Dorsolateral prefrontal cortex (tissue), 120 donors: ENCODE measurements at regions of chr12 and their contacts with region 1.

Region 1: DNA sequence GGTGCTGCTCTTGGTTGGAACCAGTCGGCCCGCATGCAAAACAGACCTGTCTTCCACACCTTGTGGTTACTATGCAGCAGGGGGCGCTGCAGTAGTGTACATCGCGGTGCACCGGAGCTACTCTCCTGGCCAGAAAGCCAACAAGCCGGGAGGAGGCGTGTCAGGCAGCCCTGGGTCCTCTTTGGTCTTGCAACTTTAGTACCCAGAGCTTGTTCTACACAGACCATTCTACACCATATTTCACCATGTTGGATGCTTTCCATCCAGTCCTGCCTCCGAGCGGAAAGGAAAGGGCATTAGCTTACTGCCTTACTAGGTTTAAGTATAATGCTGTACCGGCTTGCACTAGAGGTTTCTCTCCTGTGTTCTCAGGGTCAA is 927 bp upstream of the TMTC2 start:
- DNase-seq: peak; percentile 93 to 98 (median 97)
- H3K4me3 ChIP-seq: peak overlapping the region; percentile 51 to 96 (median 87)
- H3K27ac ChIP-seq: peak overlapping the region; percentile 80 to 100 (median 99)
- H3K27me3 ChIP-seq: no peaks in the 10 kb centered on the region
- CTCF ChIP-seq: peak; percentile 79 to 99 (median 94)

Region 2: DNA sequence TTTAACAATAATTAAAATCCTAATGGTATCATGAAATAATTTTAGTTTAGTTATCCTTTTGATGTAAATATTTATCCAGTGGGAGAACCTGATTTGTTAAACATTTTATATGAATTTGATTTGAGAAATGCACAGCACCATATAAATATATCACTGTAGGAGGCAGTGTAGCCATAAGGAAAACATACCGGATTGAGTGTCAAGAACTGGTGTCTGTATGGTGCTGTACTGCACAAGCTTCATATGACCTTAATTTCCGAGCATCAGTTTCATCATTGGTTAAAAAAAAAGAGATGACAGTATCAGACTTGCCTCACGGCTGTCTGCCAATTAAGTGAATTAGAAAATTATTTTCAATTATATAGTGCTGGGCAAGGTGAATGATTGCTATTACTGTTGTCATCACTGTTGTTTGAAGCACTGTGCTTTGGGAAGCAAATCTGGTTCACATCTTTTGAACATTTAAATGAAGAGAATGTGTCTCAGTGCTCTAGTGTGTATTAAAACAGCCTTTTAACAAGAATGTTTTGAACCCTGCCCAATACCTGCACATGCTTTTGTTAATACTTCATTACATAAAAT is 73.1 kb after region 1 on chr12:
- intact Hi-C with region 1: loop called in 1 of 2 experiments (anchors 5 kb)
- DNase-seq: no peak
- H3K4me3 ChIP-seq: no peak overlapping the region
- H3K27ac ChIP-seq: peak overlapping the region in 52 of 59 donors; percentile 2 to 80 (median 50)
- H3K27me3 ChIP-seq: no peaks in the 10 kb centered on the region
- CTCF ChIP-seq: peak in 38 of 56 donors; percentile 9 to 65 (median 36)

Region 3: DNA sequence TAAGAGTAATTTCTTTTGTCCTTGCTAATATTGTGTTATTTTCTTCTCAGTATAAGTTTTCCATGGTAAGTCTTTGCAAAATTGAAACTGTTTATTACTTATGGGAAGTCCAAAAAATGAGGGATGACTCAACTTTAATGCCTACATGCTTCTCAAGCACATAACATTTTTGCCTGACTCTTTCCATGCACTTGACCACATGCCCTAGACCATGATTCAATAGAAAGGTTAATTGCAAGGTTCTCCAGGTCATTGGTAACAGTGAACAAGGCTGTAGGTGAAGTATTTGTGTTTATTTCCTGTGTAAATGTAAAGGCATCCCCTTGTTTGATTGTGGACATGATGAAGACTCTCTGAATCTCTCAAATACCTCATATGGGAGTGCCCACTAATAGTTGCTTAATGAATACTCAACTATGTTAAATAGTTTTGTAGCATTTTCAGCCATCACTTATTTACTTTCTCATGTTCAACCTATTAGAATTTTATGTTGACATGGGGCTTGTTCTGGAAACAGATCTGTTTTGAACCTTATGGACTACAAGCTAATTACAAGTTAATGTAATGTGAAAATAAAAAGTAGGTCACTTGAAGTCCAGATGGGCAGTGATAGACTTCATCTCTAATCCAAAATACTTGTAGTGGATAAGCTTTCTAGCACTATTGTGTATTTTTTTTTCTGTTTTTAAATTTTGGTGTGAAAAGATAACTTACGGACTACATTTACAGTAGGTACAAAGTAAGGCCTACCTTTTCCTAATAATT is 132.7 kb after region 1 on chr12:
- intact Hi-C with region 1: no loop called
- DNase-seq: no peak
- H3K4me3 ChIP-seq: peak overlapping the region in 1 of 59 donors; percentile 1
- H3K27ac ChIP-seq: peak overlapping the region; percentile 51 to 97 (median 88)
- H3K27me3 ChIP-seq: no peaks in the 10 kb centered on the region
- CTCF ChIP-seq: no peak

Region 4: DNA sequence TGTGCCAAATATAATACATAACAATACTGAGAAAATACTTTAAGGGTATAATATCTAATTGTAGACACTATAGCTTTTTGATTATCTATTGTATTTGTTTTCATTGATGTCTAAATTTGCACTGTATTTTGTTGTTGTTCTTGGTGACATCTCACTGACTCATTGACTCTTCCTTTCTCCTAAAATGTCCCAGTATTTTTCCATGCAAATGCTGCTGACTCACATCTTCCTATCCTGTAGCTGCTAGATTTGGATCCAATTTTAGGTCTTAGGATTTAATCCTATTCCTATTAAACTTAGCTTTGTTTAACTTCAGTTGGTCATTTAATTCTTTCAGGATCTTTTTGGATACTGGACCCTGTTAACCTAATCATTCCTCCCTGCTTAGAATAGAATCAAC is 149.4 kb after region 1 on chr12:
- intact Hi-C with region 1: loop called in 1 of 2 experiments (anchors 10 kb)
- DNase-seq: no peak
- H3K4me3 ChIP-seq: no peak overlapping the region
- H3K27ac ChIP-seq: peak overlapping the region in 54 of 59 donors; percentile 7 to 97 (median 91)
- H3K27me3 ChIP-seq: no peaks in the 10 kb centered on the region
- CTCF ChIP-seq: no peak

Region 5: DNA sequence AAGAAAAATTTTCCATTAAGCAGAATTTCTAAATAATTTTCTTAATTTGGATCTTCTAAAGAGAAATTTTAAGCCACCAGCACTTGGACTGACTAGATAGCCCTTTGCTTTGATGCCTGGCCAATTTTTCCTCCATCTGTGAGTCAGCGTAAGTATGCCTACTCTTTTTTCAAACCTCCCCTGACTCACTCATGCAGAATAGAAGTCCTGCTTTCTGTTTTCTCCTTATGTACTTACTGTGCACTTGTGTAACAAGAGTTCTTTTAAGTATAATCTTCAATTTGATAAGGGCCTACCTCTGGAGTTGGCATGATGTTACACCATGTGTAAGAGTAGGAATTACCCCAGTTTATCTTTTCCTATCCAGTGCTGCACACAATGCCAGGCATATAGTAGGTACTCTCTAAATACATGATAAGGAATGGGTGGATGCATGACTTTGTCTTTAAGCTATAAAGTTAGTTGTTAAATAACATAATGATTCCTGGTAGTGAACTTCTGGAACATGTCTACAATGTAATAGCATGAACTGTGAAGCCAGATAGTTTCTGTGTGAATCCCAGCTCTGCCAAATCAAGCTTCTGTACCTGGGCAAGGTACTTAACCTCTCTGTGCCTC is 330.5 kb after region 1 on chr12:
- intact Hi-C with region 1: loop called in 1 of 2 experiments (anchors 10 kb)
- DNase-seq: peak in 3 of 10 donors; percentile 20 to 48 (median 45)
- H3K4me3 ChIP-seq: peak overlapping the region in 31 of 59 donors; percentile 2 to 50 (median 26)
- H3K27ac ChIP-seq: peak overlapping the region in 54 of 59 donors; percentile 9 to 81 (median 58)
- H3K27me3 ChIP-seq: no peaks in the 10 kb centered on the region
- CTCF ChIP-seq: no peak

Region 6: GRCh38 chr12:84502907-84503787 is 1817.4 kb after region 1 on chr12:
- intact Hi-C with region 1: loop called (anchors 5 kb)
- DNase-seq: peak in 7 of 10 donors; percentile 34 to 65 (median 42)
- H3K4me3 ChIP-seq: no peak overlapping the region
- H3K27ac ChIP-seq: no peak overlapping the region
- H3K27me3 ChIP-seq: no peaks in the 10 kb centered on the region
- CTCF ChIP-seq: peak in 55 of 56 donors; percentile 44 to 76 (median 67)